Adrenal gland (tissue), 19 donors: ENCODE measurements at regions of chr14 and their contacts with region 1.

Region 1: DNA sequence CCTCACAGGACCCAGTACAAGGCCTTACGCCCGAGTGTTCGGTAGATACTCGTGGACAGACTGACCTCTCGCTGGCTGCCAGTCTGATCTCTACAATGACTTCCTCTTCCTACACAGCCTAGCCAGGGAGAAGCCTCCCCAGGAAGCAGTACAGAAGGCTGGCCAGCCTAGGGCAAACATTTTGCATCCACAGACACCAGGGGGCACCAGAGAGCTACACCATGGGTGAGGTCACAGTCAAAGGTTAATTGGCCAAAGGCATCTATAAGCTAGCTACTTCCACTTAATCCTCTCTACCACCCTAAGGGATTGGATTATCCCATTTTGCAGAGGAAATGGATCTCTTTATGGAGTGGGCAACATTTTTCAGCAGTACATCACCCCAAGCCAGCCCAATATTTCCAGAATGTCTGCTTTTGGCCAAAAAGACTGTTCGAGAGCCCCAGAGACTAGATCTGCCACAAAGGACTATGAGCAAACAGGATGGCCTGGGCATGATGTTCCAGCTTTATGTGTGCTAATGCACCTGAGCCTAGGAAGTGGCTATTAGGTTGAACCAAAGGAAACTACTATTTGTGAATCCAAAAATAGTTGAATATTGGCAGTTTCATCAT is 14.6 kb upstream of the PNMA1 start:
- DNase-seq: peak; percentile 85 to 95 (median 88)
- H3K4me3 ChIP-seq: no peak overlapping the region
- H3K27ac ChIP-seq: peak overlapping the region in 4 of 5 donors; percentile 20 to 72 (median 47)
- H3K4me1 ChIP-seq: peaks cover 13 to 53% of the 10 kb centered on the region in 2 donors
- H3K27me3 ChIP-seq: no peaks in the 10 kb centered on the region
- CTCF ChIP-seq: peak; percentile 86 to 99 (median 96)
- POLR2A ChIP-seq: no peak

Region 2: GRCh38 chr14:73789691-73790581 is 61.1 kb after region 1 on chr14:
- intact Hi-C with region 1: no loop called
- DNase-seq: peak in 5 of 7 donors; percentile 31 to 91 (median 48)
- H3K4me3 ChIP-seq: no peak overlapping the region
- H3K27ac ChIP-seq: peak overlapping the region in 4 of 5 donors; percentile 40 to 99 (median 80)
- H3K4me1 ChIP-seq: peaks cover 22 to 56% of the 10 kb centered on the region in 2 donors
- H3K27me3 ChIP-seq: no peaks in the 10 kb centered on the region
- CTCF ChIP-seq: no peak
- POLR2A ChIP-seq: peak in 1 of 2 donors; percentile 38

Region 3: DNA sequence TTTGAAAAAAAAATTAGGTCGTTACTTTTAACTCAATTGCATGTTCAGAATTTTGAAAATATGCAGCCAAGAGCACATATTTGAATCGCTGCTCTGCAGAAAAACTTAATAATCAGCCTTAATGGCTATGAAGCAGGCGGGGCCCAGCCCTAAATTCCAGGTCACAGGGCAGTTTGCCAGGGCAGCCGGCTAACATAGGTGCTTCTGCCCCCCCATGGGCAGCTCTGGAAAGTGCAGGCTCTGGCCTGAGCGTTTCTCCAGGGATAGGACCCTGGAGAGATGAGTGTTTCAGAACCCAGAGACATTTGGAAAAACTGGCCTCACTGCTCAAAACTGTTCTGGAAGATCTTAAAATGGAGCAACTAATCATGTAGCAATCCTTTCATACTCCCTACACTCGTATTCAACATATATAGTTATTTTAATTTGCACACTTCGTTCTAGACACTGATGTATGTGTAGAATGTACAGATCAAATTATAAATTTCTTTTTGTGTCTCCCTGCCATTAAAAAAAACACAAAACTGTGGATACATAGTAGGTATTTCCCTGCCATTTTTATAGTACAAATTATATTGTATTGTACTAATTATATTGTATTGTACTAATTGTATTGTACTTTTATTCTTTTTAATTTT is 96.8 kb after region 1 on chr14:
- intact Hi-C with region 1: loop called (anchors 5 kb)
- DNase-seq: peak; percentile 90 to 97 (median 96)
- H3K4me3 ChIP-seq: no peak overlapping the region
- H3K27ac ChIP-seq: no peak overlapping the region
- H3K4me1 ChIP-seq: peaks cover 3 to 18% of the 10 kb centered on the region in 2 donors
- H3K27me3 ChIP-seq: no peaks in the 10 kb centered on the region
- CTCF ChIP-seq: peak; percentile 68 to 92 (median 88)
- POLR2A ChIP-seq: no peak